Left ventricle myocardium superior (tissue), 1 donor: ENCODE measurements at regions of chrX and their contacts with region 1.

Region 1: GRCh38 chrX:152044383-152044782 is 69.9 kb upstream of the GABRE start:
- DNase-seq: no peak
- ATAC-seq: no peak

Region 2: DNA sequence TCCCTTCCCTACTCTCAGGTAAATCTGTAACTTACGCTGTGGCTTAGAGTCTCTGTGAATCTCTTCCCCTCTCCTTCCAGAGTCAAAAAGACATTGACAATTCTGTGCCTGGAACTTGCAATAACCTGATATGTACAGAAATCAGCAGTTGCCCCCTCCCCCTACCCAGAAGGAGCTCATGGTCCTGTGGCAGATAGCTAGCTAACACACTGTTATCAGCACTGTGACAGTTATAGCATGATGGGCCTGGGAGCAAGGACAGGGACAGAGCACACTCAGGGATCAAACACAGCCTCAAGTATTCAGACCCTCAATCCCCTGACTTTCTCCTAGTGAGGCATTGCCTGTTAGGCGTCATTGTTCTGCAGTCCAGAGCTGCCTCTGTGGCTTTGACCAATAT is 112.7 kb after region 1 on chrX:
- intact Hi-C with region 1: no loop called
- DNase-seq: no peak
- ATAC-seq: no peak

Region 3: DNA sequence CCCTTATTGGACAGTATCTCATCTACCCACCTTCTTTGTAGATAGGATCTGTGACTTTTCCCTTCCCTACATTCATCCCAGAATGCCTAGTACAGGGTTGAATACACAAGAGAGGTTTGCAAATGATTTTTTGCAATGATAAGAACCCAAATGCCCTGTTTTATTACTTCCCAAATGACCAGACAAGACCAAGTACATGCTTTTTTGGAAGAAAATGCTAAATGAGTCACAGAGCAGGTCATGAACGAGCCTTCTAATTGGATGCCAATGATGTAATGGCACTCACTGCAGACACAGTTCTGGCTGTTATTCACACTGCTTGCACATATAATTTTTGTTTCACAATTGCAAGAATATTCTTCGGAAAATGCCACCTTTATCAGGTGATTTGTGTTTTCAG is 575.5 kb after region 1 on chrX:
- intact Hi-C with region 1: loop called (anchors 10 kb)
- DNase-seq: no peak
- ATAC-seq: no peak